B cell (primary cell): ENCODE measurements at regions of chr3 and their contacts with region 1.

Region 1: GRCh38 chr3:50192689-50193141 is 1.3 kb downstream of the GNAT1 start:
- DNase-seq: peak; percentile 88
- ATAC-seq: peak; percentile 69
- H3K4me3 ChIP-seq: no peak overlapping the region
- H3K4me3 Mint-ChIP-seq: peak overlapping the region; percentile 52
- H3K27ac ChIP-seq: no peak overlapping the region
- H3K27ac Mint-ChIP-seq: no peak overlapping the region
- H3K4me1 ChIP-seq: peaks cover 17 to 23% of the 10 kb centered on the region in 2 donors
- H3K4me1 Mint-ChIP-seq: peaks cover 11% of the 10 kb centered on the region
- H3K27me3 ChIP-seq: peaks cover 0 to 46% (median 11%) of the 10 kb centered on the region in 4 experiments
- H3K27me3 Mint-ChIP-seq: peaks cover 18% of the 10 kb centered on the region
- CTCF ChIP-seq: peak; percentile 86

Region 2: GRCh38 chr3:50121416-50122032 is 71.2 kb before region 1 on chr3:
- CTCF ChIA-PET with region 1: interaction called, 15 read pairs
- POLR2A ChIA-PET with region 1: interaction called, 6 read pairs
- intact Hi-C with region 1: loop called (anchors 2 kb)
- DNase-seq: peak; percentile 82
- ATAC-seq: peak; percentile 80
- H3K4me3 ChIP-seq: no peak overlapping the region
- H3K4me3 Mint-ChIP-seq: no peak overlapping the region
- H3K27ac ChIP-seq: no peak overlapping the region
- H3K27ac Mint-ChIP-seq: no peak overlapping the region
- H3K4me1 ChIP-seq: no peaks in the 10 kb centered on the region
- H3K4me1 Mint-ChIP-seq: peaks cover 2% of the 10 kb centered on the region
- H3K27me3 ChIP-seq: peaks cover 0 to 2% (median 0%) of the 10 kb centered on the region in 4 experiments
- H3K27me3 Mint-ChIP-seq: no peaks in the 10 kb centered on the region
- CTCF ChIP-seq: peak; percentile 91

Region 3: DNA sequence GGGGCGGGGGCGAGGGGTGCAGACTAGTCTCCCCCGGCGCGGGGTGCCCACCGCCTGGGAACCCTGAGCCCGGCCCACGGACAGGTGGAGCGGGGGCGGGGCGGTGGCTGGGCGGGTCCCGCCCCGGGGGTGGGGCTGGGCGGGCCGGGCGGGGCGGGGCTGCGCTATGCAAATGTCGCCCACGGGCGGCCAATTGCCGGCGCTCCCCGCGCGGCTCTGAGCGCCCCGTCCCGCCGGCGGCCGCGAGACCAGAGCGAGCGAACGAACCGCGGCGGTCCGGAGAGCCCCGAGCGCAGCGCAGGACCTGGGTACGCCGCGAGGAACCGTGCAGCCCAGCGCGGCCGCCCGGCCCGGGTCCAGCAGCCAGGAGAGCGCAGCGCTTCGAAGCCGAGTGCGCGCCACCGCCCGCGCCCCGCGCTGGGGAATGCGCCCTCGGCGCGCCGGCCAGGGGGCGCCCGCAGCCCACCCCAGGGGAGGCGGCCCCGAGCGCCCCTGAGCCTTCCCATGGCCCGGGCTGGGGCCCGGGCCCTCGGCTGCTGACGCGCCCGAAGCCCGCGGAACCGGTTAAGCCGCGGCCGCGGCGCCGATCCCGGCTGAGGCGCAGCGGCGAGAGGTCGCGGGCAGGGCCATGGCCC is 37.8 kb before region 1 on chr3 and contains the start of gene SEMA3F:
- CTCF ChIA-PET with region 1: interaction called, 3 read pairs
- POLR2A ChIA-PET with region 1: no interaction called
- intact Hi-C with region 1: loop called (anchors 1 kb)
- DNase-seq: peak; percentile 83
- ATAC-seq: peak; percentile 89
- H3K4me3 ChIP-seq: peak within 1 kb of the TSS in 4 of 5 experiments; percentile 17 to 60 (median 54)
- H3K4me3 Mint-ChIP-seq: peak within 1 kb of the TSS; percentile 86
- H3K27ac ChIP-seq: no peak within 1 kb of the TSS
- H3K27ac Mint-ChIP-seq: peak within 1 kb of the TSS; percentile 26
- H3K4me1 ChIP-seq: peaks cover 14 to 20% of the 10 kb centered on the region in 2 donors
- H3K4me1 Mint-ChIP-seq: peaks cover 15% of the 10 kb centered on the region
- H3K27me3 ChIP-seq: peaks cover 0 to 48% (median 19%) of the 10 kb centered on the region in 4 experiments
- H3K27me3 Mint-ChIP-seq: peaks cover 34% of the 10 kb centered on the region
- CTCF ChIP-seq: no peak
- total RNA-seq, gene SEMA3F: 0.27 TPM in 1 of 2 replicates, not detected in the other

Region 4: DNA sequence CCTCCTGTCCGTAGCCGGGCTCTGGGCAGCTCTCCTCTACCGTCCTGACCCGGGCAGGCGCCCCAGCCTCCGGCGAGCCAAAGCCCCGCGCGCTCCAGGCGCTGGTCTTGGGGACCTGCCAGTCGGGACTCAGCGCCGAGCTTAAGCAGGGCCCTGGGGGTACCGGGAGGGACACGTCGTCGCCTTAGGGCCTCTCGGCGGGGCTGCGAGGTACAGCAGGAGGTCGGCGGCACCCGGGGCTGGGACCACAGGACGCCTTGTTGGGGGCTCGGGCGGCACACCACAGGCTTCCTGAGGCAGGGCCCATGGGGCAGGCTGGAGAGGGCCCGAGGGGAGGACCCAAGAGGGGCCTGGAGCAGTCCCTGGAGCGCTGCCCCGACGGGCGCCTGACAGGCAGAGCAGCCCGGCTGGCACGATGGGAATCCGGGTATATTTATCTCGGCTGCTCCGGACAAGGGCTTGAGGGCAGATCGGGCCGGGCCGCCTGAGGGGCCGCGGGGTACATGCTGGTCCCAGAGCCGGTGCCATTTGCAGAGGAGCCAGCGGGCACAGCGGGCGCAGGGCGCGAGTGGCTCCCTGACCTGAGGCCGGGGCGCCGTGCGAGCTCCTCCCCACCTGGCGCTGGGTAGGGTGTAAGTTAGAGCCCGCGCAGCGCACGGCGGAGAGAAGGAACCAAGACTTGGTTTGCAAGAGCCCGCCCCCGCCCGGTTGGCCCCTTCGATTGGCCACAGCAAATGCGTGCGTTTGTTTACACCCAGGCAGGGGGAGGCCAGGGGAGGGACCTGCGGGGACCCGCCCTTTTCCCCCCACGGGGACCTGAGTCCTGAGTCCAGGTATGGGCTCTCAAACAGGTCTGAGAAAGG is 12.9 kb after region 1 on chr3:
- CTCF ChIA-PET with region 1: interaction called, 27 read pairs
- POLR2A ChIA-PET with region 1: no interaction called
- intact Hi-C with region 1: no loop called
- DNase-seq: peak; percentile 66
- ATAC-seq: peak; percentile 74
- H3K4me3 ChIP-seq: peak overlapping the region in 3 of 5 experiments; percentile 9 to 25 (median 10)
- H3K4me3 Mint-ChIP-seq: peak overlapping the region; percentile 47
- H3K27ac ChIP-seq: no peak overlapping the region
- H3K27ac Mint-ChIP-seq: no peak overlapping the region
- H3K4me1 ChIP-seq: peaks cover 15 to 23% of the 10 kb centered on the region in 2 donors
- H3K4me1 Mint-ChIP-seq: peaks cover 2% of the 10 kb centered on the region
- H3K27me3 ChIP-seq: peaks cover 0 to 63% (median 26%) of the 10 kb centered on the region in 4 experiments
- H3K27me3 Mint-ChIP-seq: peaks cover 43% of the 10 kb centered on the region
- CTCF ChIP-seq: no peak

Region 5: GRCh38 chr3:50245831-50246516 is 53.3 kb after region 1 on chr3:
- CTCF ChIA-PET with region 1: interaction called, 67 read pairs
- POLR2A ChIA-PET with region 1: no interaction called
- intact Hi-C with region 1: loop called (anchors 1 kb)
- DNase-seq: peak; percentile 92
- ATAC-seq: peak; percentile 66
- H3K4me3 ChIP-seq: peak overlapping the region in 4 of 5 experiments; percentile 37 to 50 (median 40)
- H3K4me3 Mint-ChIP-seq: peak overlapping the region; percentile 82
- H3K27ac ChIP-seq: peak overlapping the region; percentile 76 to 86
- H3K27ac Mint-ChIP-seq: peak overlapping the region; percentile 89
- H3K4me1 ChIP-seq: peaks cover 66 to 94% of the 10 kb centered on the region in 2 donors
- H3K4me1 Mint-ChIP-seq: peaks cover 82% of the 10 kb centered on the region
- H3K27me3 ChIP-seq: no peaks in the 10 kb centered on the region
- H3K27me3 Mint-ChIP-seq: no peaks in the 10 kb centered on the region
- CTCF ChIP-seq: peak; percentile 96

Region 6: GRCh38 chr3:50272911-50273693 is 80.4 kb after region 1 on chr3:
- CTCF ChIA-PET with region 1: interaction called, 46 read pairs
- POLR2A ChIA-PET with region 1: interaction called, 3 read pairs
- intact Hi-C with region 1: no loop called
- DNase-seq: peak; percentile 91
- ATAC-seq: peak; percentile 98
- H3K4me3 ChIP-seq: peak overlapping the region in 3 of 5 experiments; percentile 8 to 48 (median 30)
- H3K4me3 Mint-ChIP-seq: peak overlapping the region; percentile 82
- H3K27ac ChIP-seq: no peak overlapping the region
- H3K27ac Mint-ChIP-seq: peak overlapping the region; percentile 81
- H3K4me1 ChIP-seq: peaks cover 33 to 39% of the 10 kb centered on the region in 2 donors
- H3K4me1 Mint-ChIP-seq: peaks cover 26% of the 10 kb centered on the region
- H3K27me3 ChIP-seq: peaks cover 0 to 53% (median 21%) of the 10 kb centered on the region in 4 experiments
- H3K27me3 Mint-ChIP-seq: peaks cover 36% of the 10 kb centered on the region
- CTCF ChIP-seq: peak; percentile 97